Ascending aorta (tissue), 2 donors: ENCODE measurements at regions of chr1 and their contacts with region 1.

Region 1: GRCh38 chr1:111990878-111991718 is 1.6 kb upstream of the KCND3 start:
- DNase-seq: peak in 1 of 2 donors; percentile 85
- H3K4me3 ChIP-seq: peak overlapping the region; percentile 75 to 94
- H3K27ac ChIP-seq: peak overlapping the region; percentile 58 to 78
- H3K4me1 ChIP-seq: peaks cover 3 to 18% of the 10 kb centered on the region in 2 donors
- H3K27me3 ChIP-seq: no peaks in the 10 kb centered on the region
- CTCF ChIP-seq: peak; percentile 7 to 48 (median 32)

Region 2: DNA sequence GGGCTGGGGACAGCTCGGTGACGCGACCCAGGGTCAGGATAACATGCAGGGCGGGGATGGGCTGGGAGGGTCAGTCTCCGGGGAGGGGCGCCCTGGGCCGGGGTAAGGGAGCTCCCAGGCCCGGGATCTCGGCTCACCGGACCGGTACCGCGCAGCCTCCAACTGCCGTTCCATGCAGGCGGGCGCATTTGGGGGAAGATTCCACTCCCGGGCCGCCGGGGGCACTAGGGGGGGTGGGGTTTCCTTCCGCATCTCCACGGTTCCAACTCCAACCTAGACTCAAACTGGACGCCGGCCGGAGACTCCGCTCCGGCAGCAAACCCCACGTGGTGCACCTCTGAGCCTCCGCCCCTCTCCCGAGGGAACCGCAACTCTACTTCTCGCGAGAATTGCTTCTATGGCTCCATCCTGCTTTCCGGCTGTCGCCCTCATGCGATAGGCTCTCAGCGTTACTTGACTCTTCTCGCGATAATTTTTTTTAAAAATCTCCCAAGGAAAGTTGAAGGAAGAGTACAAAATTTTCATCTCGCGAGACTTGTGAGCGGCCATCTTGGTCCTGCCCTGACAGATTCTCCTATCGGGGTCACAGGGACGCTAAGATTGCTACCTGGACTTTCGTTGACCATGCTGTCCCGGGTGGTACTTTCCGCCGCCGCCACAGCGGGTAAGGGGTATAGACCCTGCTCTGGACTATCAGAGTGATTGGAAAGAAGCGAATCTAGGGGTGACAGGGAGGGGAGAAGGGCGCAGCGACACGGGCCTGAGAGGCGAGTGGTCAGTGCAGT is 542.0 kb before region 1 on chr1 and contains the starts of genes ATP5PB and WDR77:
- intact Hi-C with region 1: loop called (anchors 2 kb)
- DNase-seq: peak; percentile 89 to 98
- H3K4me3 ChIP-seq: peak within 1 kb of the TSS; percentile 85 to 96
- H3K27ac ChIP-seq: peak within 1 kb of the TSS; percentile 80 to 84
- H3K4me1 ChIP-seq: peaks cover 13 to 29% of the 10 kb centered on the region in 2 donors
- H3K27me3 ChIP-seq: no peaks in the 10 kb centered on the region
- CTCF ChIP-seq: peak in 1 of 3 experiments; percentile 7
- total RNA-seq, gene ATP5PB: 24.7 TPM
- total RNA-seq, gene WDR77: 31.2 TPM

Region 3: DNA sequence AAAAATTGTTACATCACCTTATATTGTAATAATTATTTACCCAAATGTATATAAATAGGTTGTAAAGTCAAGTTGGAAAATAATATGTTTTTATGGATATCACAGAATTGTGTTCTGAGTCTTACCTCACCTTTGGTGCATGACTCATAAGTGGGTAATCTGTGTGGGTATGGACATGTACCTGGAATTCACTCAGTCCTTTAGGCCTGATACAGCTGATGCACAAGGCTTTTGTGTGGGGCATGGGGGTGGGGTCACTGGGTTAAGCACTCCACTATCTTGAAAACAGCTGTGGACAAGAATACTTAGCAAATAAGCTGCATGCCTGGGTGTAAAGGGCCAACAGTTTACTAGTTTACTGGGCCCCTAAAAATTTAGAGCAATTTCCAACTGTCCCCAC is 286.3 kb before region 1 on chr1:
- intact Hi-C with region 1: no loop called
- DNase-seq: no peak
- H3K4me3 ChIP-seq: no peak overlapping the region
- H3K27ac ChIP-seq: no peak overlapping the region
- H3K4me1 ChIP-seq: no peaks in the 10 kb centered on the region
- H3K27me3 ChIP-seq: no peaks in the 10 kb centered on the region
- CTCF ChIP-seq: no peak

Region 4: GRCh38 chr1:111789666-111790316 is 201.3 kb before region 1 on chr1:
- intact Hi-C with region 1: loop called (anchors 5 kb)
- DNase-seq: no peak
- H3K4me3 ChIP-seq: no peak overlapping the region
- H3K27ac ChIP-seq: no peak overlapping the region
- H3K4me1 ChIP-seq: no peaks in the 10 kb centered on the region
- H3K27me3 ChIP-seq: no peaks in the 10 kb centered on the region
- CTCF ChIP-seq: peak in 2 of 3 experiments; percentile 7 to 33

Region 5: DNA sequence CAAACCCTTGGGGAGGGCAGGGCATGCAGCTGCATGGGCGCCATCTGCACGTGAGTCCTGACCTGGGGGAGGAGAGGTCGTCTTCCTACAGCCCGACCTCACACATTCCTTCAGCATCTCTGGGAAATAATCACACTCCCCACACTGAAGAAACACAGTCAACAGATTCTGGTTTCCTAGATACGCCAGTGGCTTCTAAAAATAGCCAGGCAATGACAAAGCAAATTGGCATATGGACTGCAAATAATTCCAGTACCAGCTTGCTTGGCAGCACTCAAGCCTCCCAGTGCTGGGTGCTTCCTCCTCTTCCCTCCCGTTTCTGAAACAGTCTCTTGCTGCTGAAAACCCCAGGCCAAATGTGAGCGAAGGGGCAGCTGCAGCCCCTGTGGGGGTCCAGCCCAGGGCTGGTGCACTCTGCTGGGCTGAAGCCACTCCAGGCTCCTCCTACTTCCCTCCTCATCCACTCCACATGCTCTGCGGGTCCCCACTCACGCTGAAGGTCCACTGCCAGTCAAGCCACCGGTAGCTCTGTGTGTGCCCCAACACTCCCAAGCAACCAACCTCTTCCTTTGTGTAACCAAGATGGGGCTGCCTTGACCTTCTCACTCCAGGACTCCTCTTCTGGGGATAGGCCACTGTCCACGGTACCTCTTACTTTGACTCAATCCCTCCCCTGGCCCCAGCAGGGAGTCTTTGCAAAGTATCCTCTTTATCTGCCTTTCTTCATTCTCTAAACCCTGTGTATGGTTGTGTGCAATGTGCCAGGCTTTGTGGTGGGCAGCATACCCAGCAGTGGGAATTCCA is 70.7 kb before region 1 on chr1:
- intact Hi-C with region 1: loop called (anchors 1 kb)
- DNase-seq: peak in 1 of 2 donors; percentile 83
- H3K4me3 ChIP-seq: no peak overlapping the region
- H3K27ac ChIP-seq: peak overlapping the region; percentile 76 to 77
- H3K4me1 ChIP-seq: peaks cover 0 to 12% of the 10 kb centered on the region in 2 donors
- H3K27me3 ChIP-seq: no peaks in the 10 kb centered on the region
- CTCF ChIP-seq: no peak

Region 6: DNA sequence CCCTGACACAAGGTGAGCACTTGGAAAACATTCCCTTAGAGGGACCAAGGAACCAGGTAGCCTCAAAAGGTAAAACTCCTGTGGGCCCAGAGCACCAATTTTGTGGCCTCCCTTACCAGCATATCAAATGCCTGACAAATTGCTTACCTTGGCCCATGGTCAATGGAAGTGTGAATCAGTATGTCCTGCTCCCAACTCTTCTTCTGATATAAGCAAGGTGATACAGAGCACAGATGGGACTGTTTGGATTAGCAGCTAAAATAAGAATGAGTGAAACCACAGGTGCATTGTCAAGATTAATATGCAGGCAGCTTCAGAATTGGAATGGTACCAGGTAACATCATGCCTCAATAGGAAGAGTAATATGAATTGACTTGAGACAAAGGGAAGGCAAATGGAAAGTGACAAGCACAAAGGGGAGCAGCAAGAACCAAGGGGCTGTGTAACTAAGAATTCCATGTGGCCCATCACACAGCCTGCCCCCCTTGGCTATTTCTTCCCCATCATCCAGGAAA is 155.2 kb after region 1 on chr1:
- intact Hi-C with region 1: no loop called
- DNase-seq: no peak
- H3K4me3 ChIP-seq: no peak overlapping the region
- H3K27ac ChIP-seq: no peak overlapping the region
- H3K4me1 ChIP-seq: no peaks in the 10 kb centered on the region
- H3K27me3 ChIP-seq: no peaks in the 10 kb centered on the region
- CTCF ChIP-seq: no peak